Esophagus muscularis mucosa (tissue), 4 donors: ENCODE measurements at regions of chr13 and their contacts with region 1.

Region 1: GRCh38 chr13:77779552-77780272 is 82.2 kb downstream of the SLAIN1 start:
- DNase-seq: no peak
- H3K4me3 ChIP-seq: no peak overlapping the region
- H3K27ac ChIP-seq: no peak overlapping the region
- H3K4me1 ChIP-seq: peaks cover 0 to 10% (median 2%) of the 10 kb centered on the region in 4 donors
- H3K27me3 ChIP-seq: no peaks in the 10 kb centered on the region
- CTCF ChIP-seq: peak; percentile 60 to 75 (median 71)
- EP300 ChIP-seq: no peak
- POLR2A ChIP-seq: no peak

Region 2: GRCh38 chr13:78121459-78122348 is 342.0 kb after region 1 on chr13:
- intact Hi-C with region 1: loop called (anchors 1 kb)
- DNase-seq: no peak
- H3K4me3 ChIP-seq: no peak overlapping the region
- H3K27ac ChIP-seq: no peak overlapping the region
- H3K4me1 ChIP-seq: peaks cover 0 to 9% (median 2%) of the 10 kb centered on the region in 4 donors
- H3K27me3 ChIP-seq: peaks cover 0 to 11% (median 0%) of the 10 kb centered on the region in 4 donors
- CTCF ChIP-seq: peak; percentile 79 to 89 (median 85)
- EP300 ChIP-seq: no peak
- POLR2A ChIP-seq: no peak